ENCODE measurements at regions of chr13 and their contacts with region 1.

Region 1: DNA sequence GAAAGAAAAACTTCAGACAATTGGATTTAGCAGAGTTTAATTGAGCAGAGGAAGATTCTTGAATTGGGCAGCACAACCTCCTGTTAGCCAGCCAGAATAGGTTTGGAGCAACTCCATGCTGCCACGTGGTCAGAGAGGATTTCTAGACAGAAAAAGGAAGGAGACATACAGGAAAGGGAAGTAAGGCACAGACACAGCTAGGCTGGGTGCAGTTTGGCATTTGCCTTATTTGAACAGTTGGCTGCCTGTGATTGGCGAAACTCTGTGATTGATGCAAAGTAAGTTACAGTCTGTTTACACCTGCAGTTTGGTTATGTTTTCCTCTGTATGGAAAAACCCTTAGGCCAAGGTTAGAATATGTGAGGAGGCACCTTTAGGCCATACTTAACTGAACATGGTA is 85.8 kb upstream of the SPATA13 start:
- DNase-seq: peak in 1 of 2 donors; percentile 68
- ATAC-seq: no peak
- H3K4me3 ChIP-seq: no peak overlapping the region
- H3K27ac ChIP-seq: peak overlapping the region in 1 of 2 donors; percentile 1
- H3K4me1 ChIP-seq: peaks cover 0 to 5% of the 10 kb centered on the region in 2 donors
- H3K27me3 ChIP-seq: no peaks in the 10 kb centered on the region

Region 2: DNA sequence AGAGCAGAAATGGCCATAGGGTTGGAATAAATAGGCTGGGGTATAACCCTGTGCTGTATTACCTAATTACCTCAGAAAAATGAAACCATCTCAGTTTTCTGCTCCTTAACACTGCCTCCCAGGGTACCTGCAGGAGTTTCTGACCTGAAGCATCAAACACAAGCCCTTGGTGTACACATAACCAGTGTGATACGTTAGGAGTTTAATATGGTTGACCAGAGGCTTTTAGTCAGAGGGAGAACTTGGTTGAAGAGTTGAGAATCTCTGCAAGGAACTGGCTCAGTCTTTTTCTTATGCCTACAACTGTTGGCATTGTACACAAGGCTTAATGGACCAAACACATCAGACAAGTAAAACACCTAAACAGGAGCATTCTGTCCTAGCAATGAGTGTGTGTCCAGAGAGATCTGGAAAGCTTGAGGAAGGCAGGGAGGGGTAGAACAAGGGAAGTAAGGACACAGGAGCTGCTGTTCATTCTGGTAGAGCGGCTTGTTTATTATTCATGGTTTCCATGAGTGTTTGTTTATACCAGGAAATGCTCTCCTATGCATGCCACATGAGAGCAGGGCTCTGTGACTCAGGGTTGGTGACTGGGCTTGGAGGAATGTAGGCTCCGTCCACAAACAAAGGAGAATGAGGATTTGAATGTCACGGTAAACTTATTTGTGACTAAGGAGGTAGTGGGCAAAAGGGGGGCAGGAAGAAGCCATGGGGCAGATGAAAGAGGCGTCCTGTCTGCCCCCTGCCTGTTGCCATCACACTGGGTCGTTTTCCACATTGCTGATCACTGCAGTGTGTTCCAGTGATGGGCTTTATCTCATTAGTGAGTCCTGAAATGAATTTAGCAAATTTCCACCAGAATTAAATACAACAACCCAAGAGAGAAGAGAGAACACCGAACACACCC is 74.0 kb after region 1 on chr13:
- intact Hi-C with region 1: no loop called
- DNase-seq: no peak
- ATAC-seq: no peak
- H3K4me3 ChIP-seq: no peak overlapping the region
- H3K27ac ChIP-seq: no peak overlapping the region
- H3K4me1 ChIP-seq: no peaks in the 10 kb centered on the region
- H3K27me3 ChIP-seq: no peaks in the 10 kb centered on the region

Region 3: GRCh38 chr13:24160454-24161009 is 85.8 kb after region 1 on chr13 and contains the start of gene SPATA13:
- intact Hi-C with region 1: loop called in 1 of 2 experiments (anchors 5 kb)
- DNase-seq: peak; percentile 93 to 97
- ATAC-seq: peak; percentile 96
- H3K4me3 ChIP-seq: peak within 1 kb of the TSS; percentile 22 to 66
- H3K27ac ChIP-seq: no peak within 1 kb of the TSS
- H3K4me1 ChIP-seq: no peaks in the 10 kb centered on the region
- H3K27me3 ChIP-seq: no peaks in the 10 kb centered on the region
- total RNA-seq, gene SPATA13: 10.9 to 18.2 TPM

Region 4: DNA sequence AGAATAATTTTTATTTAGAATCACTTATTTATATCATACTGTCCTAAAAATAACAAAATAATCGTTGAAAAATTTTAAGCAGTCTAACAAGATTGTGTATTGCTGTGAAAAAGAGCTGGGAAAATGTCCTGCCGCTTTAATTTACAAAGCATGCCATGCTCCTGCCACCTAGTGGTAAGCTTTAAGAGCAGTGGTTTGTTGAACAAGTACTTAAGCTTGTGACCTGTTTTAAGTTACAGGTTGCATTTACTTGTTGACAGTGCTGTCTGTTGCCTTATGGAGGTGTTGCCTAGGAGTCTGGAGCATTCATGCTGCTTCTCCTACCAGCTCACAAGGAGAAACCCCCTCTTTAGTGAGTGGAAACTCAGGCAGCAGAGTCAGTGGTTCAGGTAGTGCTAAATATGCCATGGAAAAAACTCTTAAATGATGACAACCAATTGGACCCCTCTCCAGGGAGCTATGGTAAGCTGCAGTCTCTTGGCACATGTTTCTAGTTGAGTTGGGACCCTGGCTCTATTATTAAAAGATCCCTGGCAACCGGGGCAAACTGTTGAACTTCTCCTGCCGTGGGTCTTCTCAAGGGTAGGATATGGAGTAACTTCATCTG is 154.3 kb after region 1 on chr13:
- intact Hi-C with region 1: no loop called
- DNase-seq: no peak
- ATAC-seq: no peak
- H3K4me3 ChIP-seq: no peak overlapping the region
- H3K27ac ChIP-seq: no peak overlapping the region
- H3K4me1 ChIP-seq: no peaks in the 10 kb centered on the region
- H3K27me3 ChIP-seq: no peaks in the 10 kb centered on the region

Measured in aorta (tissue), 5 donors.